Keratinocyte (primary cell): ENCODE measurements at regions of chr12 and their contacts with region 1.

Region 1: DNA sequence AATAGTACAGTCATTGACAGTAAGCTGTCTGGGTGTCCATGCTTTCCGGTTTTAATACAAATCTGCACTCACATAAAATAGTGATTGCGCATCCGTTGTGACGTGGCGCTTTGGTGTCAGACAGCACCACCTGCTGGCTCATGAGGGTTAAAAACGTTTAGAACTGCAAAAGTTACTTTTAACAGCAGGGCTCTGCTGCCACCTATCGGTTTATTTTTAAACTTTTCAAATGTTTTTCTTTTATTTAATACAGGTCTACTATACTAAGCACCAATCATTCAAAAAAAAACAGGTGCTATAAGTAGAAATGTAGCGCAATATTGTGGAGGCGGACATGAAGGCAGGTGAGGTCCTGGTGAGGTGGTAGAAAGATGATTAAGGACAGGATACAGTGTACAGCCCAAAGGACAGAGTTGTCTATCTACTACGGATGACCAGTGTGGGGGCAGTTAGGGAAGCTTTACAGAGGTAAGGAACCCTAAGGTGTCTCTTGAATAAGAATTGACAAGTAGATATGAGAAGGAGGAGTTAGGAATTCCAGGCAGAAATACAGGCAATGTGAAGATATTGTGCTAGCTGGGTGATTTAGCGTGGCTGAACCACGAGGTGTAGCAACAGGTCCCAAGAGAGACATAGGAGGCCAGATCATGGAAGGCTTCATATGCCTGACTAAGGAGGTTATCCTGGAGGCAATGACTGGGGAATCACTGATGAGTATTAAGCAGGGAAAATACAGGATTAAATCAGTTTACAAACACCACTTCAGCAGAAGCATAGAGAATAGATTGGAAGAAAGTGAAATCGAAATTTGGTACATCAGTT is 91.5 kb upstream of the PRB2 start:
- DNase-seq: peak; percentile 36
- H3K4me3 ChIP-seq: no peak overlapping the region
- H3K27ac ChIP-seq: no peak overlapping the region
- H3K4me1 ChIP-seq: no peaks in the 10 kb centered on the region
- H3K27me3 ChIP-seq: no peaks in the 10 kb centered on the region
- CTCF ChIP-seq: peak; percentile 83 to 93 (median 90)

Region 2: GRCh38 chr12:11228296-11228879 is 258.4 kb before region 1 on chr12:
- dilution Hi-C with region 1: loop called (anchors 25 kb)
- DNase-seq: no peak
- H3K4me3 ChIP-seq: no peak overlapping the region
- H3K27ac ChIP-seq: no peak overlapping the region
- H3K4me1 ChIP-seq: no peaks in the 10 kb centered on the region
- H3K27me3 ChIP-seq: no peaks in the 10 kb centered on the region
- CTCF ChIP-seq: peak; percentile 82 to 95 (median 89)

Region 3: DNA sequence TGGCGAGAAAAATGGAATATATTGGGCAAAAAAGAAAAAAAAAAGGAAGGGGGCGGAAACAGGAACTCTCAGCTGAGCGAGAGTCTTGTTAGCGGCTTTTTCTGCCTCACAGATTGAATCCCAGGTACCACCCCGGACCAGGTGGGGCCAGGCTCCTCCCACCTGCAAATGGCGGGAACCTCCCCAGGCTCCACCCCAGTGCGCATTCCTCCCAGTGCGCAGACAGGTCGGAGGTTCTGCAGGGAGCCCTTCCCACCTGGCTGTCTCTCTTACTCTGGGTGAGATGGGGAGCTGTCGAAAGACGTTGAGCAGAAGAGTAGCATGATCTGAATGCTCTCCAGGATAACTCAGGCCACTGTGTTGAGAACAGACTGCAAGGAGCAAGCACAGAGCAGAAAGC is 105.7 kb after region 1 on chr12:
- dilution Hi-C with region 1: no loop called
- DNase-seq: no peak
- H3K4me3 ChIP-seq: no peak overlapping the region
- H3K27ac ChIP-seq: no peak overlapping the region
- H3K4me1 ChIP-seq: peaks cover 3% of the 10 kb centered on the region
- H3K27me3 ChIP-seq: no peaks in the 10 kb centered on the region
- CTCF ChIP-seq: no peak